Caco-2 (cell line): ENCODE measurements at regions of chr11 and their contacts with region 1.

Region 1: GRCh38 chr11:77127232-77127911 is 674 bp upstream of the MYO7A start:
- DNase-seq: peak; percentile 70 to 84
- H3K4me3 ChIP-seq: peak overlapping the region; percentile 47
- H3K4me3 Mint-ChIP-seq: peak overlapping the region; percentile 69
- H3K27ac Mint-ChIP-seq: peak overlapping the region; percentile 72
- H3K4me1 ChIP-seq: peaks cover 10% of the 10 kb centered on the region
- H3K4me1 Mint-ChIP-seq: peaks cover 19% of the 10 kb centered on the region
- H3K27me3 ChIP-seq: no peaks in the 10 kb centered on the region
- H3K27me3 Mint-ChIP-seq: no peaks in the 10 kb centered on the region
- CTCF ChIP-seq: peak; percentile 100

Region 2: DNA sequence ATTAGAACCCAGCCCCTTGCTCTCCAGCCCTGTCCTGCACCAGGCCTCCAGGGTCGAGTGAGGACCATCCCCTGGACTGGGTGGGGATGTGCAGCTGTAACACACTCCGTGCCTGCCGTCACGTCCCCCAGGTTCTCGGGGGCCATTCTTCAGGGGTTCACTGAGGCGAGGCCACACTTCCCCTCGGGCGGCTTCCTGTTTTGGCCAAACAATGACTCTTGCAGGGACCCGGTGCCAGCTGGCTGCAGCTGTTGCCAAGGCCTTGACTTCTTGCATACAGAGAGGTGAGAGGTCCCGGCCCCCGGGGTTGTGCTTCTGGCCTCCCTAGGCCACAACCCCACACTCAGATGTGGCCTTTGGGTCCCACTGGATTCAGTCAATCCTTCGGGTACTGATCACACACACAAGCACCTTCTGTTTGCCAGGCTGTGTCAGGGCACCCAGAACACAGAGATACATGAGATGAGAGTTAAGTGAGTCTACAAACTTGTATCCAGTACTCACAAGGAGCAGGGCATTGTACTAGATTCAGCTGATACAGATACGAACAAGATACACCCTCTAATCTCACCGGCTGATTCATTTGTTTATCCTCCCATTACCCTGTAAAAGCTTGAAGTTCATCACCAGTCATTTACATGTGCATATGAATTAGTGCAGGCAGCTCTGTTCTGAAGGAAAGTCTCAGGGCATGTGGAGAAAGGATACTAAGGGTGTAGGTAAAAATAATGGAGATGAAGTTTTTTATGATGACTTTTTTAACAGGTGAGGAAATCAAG is 489.7 kb before region 1 on chr11:
- CTCF ChIA-PET with region 1: no interaction called
- POLR2A ChIA-PET with region 1: no interaction called
- intact Hi-C with region 1: no loop called
- DNase-seq: no peak
- H3K4me3 ChIP-seq: no peak overlapping the region
- H3K4me3 Mint-ChIP-seq: no peak overlapping the region
- H3K27ac Mint-ChIP-seq: no peak overlapping the region
- H3K4me1 ChIP-seq: no peaks in the 10 kb centered on the region
- H3K4me1 Mint-ChIP-seq: no peaks in the 10 kb centered on the region
- H3K27me3 ChIP-seq: peaks cover 3% of the 10 kb centered on the region
- H3K27me3 Mint-ChIP-seq: peaks cover 14% of the 10 kb centered on the region
- CTCF ChIP-seq: no peak

Region 3: GRCh38 chr11:77140231-77140851 is 13.0 kb after region 1 on chr11:
- CTCF ChIA-PET with region 1: interaction called, 32 read pairs
- POLR2A ChIA-PET with region 1: interaction called, 3 read pairs
- intact Hi-C with region 1: loop called (anchors 1 kb)
- DNase-seq: no peak
- H3K4me3 ChIP-seq: no peak overlapping the region
- H3K4me3 Mint-ChIP-seq: no peak overlapping the region
- H3K27ac Mint-ChIP-seq: peak overlapping the region; percentile 54
- H3K4me1 ChIP-seq: peaks cover 36% of the 10 kb centered on the region
- H3K4me1 Mint-ChIP-seq: peaks cover 30% of the 10 kb centered on the region
- H3K27me3 ChIP-seq: no peaks in the 10 kb centered on the region
- H3K27me3 Mint-ChIP-seq: no peaks in the 10 kb centered on the region
- CTCF ChIP-seq: no peak

Region 4: DNA sequence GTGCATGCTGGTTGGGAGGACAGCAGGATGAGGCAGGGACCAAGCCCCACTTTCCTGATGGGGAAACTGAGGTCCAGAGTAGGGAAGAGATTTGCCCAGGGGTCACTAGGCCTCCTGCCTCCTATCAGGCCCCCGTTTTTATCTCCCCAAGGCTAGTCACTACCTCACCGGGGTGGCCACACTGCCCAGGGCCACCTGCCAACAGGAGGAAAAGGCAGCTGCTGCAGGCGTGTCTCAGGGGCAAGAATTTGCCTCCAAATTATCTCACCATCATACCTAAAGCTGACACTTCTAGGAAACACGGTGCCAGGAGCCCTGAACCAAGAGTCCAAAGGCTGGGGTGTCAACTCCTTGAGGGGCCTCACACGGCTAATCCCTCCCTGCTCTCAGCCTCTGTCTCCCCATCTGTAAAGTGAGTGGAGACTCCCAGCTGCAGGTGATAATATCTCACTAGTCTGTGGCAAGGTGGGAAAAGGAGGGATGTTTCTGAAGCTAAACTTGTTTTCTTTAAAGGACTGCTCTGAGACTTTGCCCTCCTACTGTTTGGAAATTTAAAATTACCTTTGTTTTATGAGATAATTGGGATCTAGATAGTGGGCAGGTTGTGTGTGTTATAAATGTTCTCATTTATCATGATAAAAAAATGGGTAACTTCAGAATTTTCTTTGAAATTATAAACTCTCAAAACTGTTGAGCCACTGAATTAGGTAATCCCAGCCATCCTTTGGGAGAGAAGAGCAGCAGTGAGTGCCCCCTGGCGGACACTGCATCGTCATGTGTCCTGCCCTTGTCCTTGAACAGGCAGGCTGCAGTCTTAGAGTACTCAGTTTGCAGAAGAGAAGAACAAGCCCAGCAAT is 60.6 kb after region 1 on chr11:
- CTCF ChIA-PET with region 1: interaction called, 116 read pairs
- POLR2A ChIA-PET with region 1: interaction called, 3 read pairs
- intact Hi-C with region 1: loop called (anchors 1 kb)
- DNase-seq: peak; percentile 83 to 91
- H3K4me3 ChIP-seq: no peak overlapping the region
- H3K4me3 Mint-ChIP-seq: no peak overlapping the region
- H3K27ac Mint-ChIP-seq: no peak overlapping the region
- H3K4me1 ChIP-seq: no peaks in the 10 kb centered on the region
- H3K4me1 Mint-ChIP-seq: no peaks in the 10 kb centered on the region
- H3K27me3 ChIP-seq: no peaks in the 10 kb centered on the region
- H3K27me3 Mint-ChIP-seq: no peaks in the 10 kb centered on the region
- CTCF ChIP-seq: peak; percentile 98 to 99

Region 5: DNA sequence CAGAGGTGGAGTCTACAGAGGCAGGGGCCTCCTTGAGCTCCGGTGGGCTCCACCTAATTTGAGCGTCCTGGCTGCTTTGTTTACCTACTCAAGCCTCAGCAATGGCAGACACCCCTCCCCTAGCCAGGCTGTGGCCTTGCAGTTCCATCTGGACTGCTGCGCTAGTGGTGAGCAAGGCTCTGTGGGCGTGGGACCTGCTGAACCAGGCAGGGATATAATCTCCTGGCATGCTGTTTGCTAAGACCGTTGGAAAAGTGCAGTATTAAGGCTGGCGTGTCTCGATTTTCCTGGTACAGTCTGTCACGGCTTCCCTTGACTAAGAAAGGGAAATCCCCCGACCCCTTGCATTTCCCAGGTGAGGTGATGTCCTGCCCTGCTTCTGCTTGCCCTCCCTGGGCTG is 96.4 kb after region 1 on chr11:
- CTCF ChIA-PET with region 1: no interaction called
- POLR2A ChIA-PET with region 1: no interaction called
- intact Hi-C with region 1: no loop called
- DNase-seq: no peak
- H3K4me3 ChIP-seq: no peak overlapping the region
- H3K4me3 Mint-ChIP-seq: no peak overlapping the region
- H3K27ac Mint-ChIP-seq: no peak overlapping the region
- H3K4me1 ChIP-seq: no peaks in the 10 kb centered on the region
- H3K4me1 Mint-ChIP-seq: no peaks in the 10 kb centered on the region
- H3K27me3 ChIP-seq: no peaks in the 10 kb centered on the region
- H3K27me3 Mint-ChIP-seq: peaks cover 15% of the 10 kb centered on the region
- CTCF ChIP-seq: no peak

Region 6: GRCh38 chr11:77457340-77457739 is 330.0 kb after region 1 on chr11:
- CTCF ChIA-PET with region 1: no interaction called
- POLR2A ChIA-PET with region 1: no interaction called
- intact Hi-C with region 1: loop called (anchors 5 kb)
- DNase-seq: no peak
- H3K4me3 ChIP-seq: no peak overlapping the region
- H3K4me3 Mint-ChIP-seq: no peak overlapping the region
- H3K27ac Mint-ChIP-seq: no peak overlapping the region
- H3K4me1 ChIP-seq: peaks cover 42% of the 10 kb centered on the region
- H3K4me1 Mint-ChIP-seq: peaks cover 49% of the 10 kb centered on the region
- H3K27me3 ChIP-seq: no peaks in the 10 kb centered on the region
- H3K27me3 Mint-ChIP-seq: no peaks in the 10 kb centered on the region
- CTCF ChIP-seq: no peak

Region 7: DNA sequence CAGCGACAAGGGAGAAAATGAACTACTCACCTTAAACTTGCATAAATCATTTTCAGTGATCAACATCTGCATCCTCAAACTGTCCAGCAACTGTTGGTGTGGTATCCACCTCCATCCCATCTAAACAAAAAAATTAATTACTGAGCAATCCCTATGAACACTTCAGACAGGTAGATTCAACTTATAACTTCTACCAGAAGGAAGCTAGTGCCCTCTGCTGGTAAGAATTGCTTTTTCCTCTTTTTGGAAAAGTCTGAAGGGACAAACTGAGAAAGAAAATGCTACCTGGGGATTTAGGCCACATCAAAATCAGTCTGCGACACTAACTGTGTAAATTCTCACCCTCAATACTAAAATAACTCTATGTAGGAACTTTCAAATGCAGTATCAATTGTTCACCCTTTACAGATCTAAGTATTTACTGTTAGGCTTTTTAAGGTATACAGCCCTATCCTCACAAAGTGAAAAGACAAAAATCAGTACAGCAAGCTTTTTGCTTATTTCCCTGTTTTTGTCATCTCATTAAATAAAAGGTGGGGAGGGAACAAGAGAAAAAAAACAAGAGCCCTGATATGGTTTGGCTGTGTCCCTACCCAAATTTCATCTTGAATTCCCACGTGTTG is 492.3 kb after region 1 on chr11:
- CTCF ChIA-PET with region 1: interaction called, 4 read pairs
- POLR2A ChIA-PET with region 1: no interaction called
- intact Hi-C with region 1: loop called (anchors 5 kb)
- DNase-seq: peak in 1 of 2 experiments; percentile 82
- H3K4me3 ChIP-seq: no peak overlapping the region
- H3K4me3 Mint-ChIP-seq: no peak overlapping the region
- H3K27ac Mint-ChIP-seq: no peak overlapping the region
- H3K4me1 ChIP-seq: no peaks in the 10 kb centered on the region
- H3K4me1 Mint-ChIP-seq: no peaks in the 10 kb centered on the region
- H3K27me3 ChIP-seq: no peaks in the 10 kb centered on the region
- H3K27me3 Mint-ChIP-seq: no peaks in the 10 kb centered on the region
- CTCF ChIP-seq: peak; percentile 85 to 90